HepG2 (cell line): ENCODE measurements at regions of chr6 and their contacts with region 1.

Region 1: DNA sequence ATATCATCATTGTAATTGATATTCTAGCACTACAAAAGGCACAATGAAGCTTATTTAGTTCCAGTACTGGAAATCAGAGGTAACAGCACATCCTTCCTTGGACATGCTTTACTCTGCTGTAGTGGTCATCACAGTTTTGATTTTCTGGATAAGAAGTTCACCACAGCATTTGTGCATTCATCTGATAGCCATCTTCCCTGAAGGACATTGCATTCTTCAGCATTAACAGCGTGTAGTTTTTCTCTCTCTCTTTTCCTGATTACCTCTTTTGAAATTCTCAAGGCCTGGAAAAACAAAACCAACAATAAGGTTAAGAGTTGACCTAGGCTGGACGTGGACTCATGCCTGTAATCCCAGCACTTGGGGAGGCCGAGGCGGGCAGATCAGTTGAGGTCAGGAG is 19.6 kb downstream of the ECI2 start:
- DNase-seq: no peak
- ATAC-seq: no peak
- H3K4me3 ChIP-seq: no peak overlapping the region
- H3K27ac ChIP-seq: no peak overlapping the region
- H3K4me1 ChIP-seq: peaks cover 18% of the 10 kb centered on the region
- H3K27me3 ChIP-seq: no peaks in the 10 kb centered on the region
- CTCF ChIP-seq: no peak
- EP300 ChIP-seq: no peak
- POLR2A ChIP-seq: 0 out of 4 replicates have a peak, but pooled peaks of 1 of the 2 experiments have one; percentile 2
- RAD21 ChIP-seq: no peak

Region 2: DNA sequence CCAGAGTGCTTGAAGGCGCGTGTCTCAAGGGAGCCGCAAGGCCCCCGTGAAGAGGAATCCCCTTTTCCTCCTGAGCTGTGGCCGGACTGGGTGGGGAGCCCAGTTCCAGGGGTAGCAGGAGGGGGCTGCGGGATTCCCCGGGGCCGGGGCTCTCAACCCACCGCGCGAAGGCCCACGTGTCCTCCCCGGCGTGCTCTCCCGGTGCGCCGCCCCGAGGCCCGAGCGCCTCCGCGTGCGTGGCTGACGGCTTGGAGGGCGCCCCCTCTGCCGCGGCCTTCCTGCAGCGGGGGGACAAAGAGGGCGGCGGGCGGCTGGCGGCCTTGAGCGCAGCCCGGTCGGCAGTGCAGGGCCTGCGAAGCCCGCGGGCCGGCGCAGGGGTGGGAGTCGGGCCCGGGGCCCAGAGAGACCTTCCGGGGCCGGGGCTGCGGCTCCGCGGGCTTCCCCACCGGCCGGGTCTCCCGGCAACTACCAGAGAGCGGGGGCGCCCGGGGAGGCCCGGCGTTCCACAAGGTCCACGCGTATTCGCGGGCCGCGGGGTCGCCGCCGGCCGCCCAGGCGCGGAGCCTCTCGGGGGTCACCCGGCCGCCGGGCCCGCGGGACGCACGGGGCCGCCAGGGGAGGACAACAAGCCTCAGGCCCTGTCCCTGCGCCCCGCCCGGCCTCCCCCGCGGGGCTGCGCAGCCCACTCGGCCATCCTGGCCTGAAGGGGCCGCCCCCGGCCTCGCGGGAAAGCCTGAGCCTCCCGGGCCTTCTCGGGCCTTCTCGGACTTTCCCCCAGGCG is 36.9 kb before region 1 on chr6 and contains the start of gene FAM217A:
- CTCF ChIA-PET with region 1: no interaction called
- POLR2A ChIA-PET with region 1: interaction called, 3 read pairs
- in situ Hi-C with region 1: no loop called
- intact Hi-C with region 1: loop called (anchors 5 kb)
- DNase-seq: no peak
- ATAC-seq: no peak
- H3K4me3 ChIP-seq: no peak within 1 kb of the TSS
- H3K27ac ChIP-seq: no peak within 1 kb of the TSS
- H3K4me1 ChIP-seq: peaks cover 25% of the 10 kb centered on the region
- H3K27me3 ChIP-seq: peaks cover 0 to 10% of the 10 kb centered on the region in 2 experiments; a peak in 4 of 5 replicates
- CTCF ChIP-seq: no peak
- EP300 ChIP-seq: no peak
- POLR2A ChIP-seq: no peak
- RAD21 ChIP-seq: no peak
- total RNA-seq, gene FAM217A: not detected in 2 replicates